ENCODE measurements at regions of chr10 and their contacts with region 1.

Region 1: DNA sequence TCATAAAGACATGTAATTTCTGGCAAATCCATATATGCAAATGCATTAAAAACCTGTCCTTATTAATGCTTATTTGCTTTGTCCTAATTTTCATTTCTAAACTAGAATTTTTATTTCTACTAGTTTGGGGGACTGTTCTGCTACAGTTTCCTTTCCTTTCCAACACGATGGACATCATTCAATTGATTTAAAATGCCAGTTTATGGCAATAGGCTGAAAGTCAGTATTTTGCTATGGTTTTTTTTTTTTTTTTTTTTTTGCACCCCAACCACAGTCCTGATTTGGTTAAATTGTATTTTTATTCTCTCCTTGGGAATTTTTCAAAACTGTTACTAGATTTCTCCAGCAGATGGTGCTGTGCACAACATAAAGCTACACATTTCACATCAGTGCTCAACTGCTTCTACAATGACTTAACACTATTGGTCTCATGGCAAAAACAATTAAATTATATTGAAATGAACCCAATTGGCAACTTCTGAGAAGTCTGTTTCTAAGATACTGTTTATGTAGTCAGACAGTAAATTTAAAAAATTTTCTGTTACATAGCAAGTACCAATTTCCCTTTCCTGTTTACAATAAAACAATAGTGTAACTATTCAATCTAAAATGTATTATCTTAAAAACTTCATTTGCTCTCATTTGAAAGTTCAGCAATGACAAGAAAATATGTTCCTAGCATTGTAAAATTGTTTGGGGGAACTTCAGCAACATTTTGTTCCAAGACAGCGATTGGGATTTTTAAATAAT is 193.8 kb upstream of the CCDC6 start:
- DNase-seq: no peak
- ATAC-seq: peak; percentile 69 to 95 (median 90)
- H3K4me3 ChIP-seq: no peak overlapping the region
- H3K27ac ChIP-seq: no peak overlapping the region
- H3K4me1 ChIP-seq: no peaks in the 10 kb centered on the region
- H3K27me3 ChIP-seq: no peaks in the 10 kb centered on the region
- CTCF ChIP-seq: peak in 3 of 4 donors; percentile 37 to 45 (median 44)

Region 2: GRCh38 chr10:60048091-60048501 is 52.1 kb before region 1 on chr10:
- intact Hi-C with region 1: no loop called
- DNase-seq: peak in 2 of 6 donors; percentile 19 to 26
- ATAC-seq: peak in 3 of 4 donors; percentile 63 to 88 (median 79)
- H3K4me3 ChIP-seq: no peak overlapping the region
- H3K27ac ChIP-seq: no peak overlapping the region
- H3K4me1 ChIP-seq: peaks cover 7 to 8% (median 8%) of the 10 kb centered on the region in 3 donors
- H3K27me3 ChIP-seq: no peaks in the 10 kb centered on the region
- CTCF ChIP-seq: no peak

Region 3: DNA sequence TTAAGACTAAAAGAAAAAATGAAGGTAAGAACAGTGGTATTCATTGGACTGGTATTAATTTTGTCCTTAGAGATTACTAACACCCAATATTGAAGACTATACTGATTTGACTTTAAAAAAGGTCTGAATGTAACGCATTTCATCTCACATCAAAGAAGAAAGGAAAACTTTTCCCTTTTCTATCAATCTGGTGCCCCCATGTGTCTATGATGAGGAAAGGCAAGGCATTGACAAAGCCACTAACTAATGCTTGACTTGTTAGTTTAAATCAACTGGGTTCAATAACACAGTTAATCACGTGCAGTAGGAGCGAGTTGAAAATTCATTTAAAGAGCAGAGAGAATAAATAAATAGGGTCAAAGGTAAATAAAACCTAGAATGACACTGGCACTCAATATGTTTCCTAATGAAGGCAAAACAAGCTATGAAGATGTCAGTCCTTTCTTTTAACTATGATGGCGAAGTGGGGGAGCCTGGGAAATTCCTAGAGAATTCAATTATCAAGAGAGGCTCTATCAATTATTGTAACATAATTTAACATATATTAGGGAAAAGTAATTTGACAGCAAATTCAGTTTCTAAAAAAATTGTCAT is 108.6 kb after region 1 on chr10:
- intact Hi-C with region 1: loop called in 1 of 3 experiments (anchors 10 kb)
- DNase-seq: no peak
- ATAC-seq: peak in 3 of 4 donors; percentile 69 to 76 (median 71)
- H3K4me3 ChIP-seq: no peak overlapping the region
- H3K27ac ChIP-seq: no peak overlapping the region
- H3K4me1 ChIP-seq: no peaks in the 10 kb centered on the region
- H3K27me3 ChIP-seq: no peaks in the 10 kb centered on the region
- CTCF ChIP-seq: peak in 3 of 4 donors; percentile 47 to 51 (median 50)

Measured in pancreas (tissue), 10 donors.